ENCODE measurements at regions of chr5 and their contacts with region 1.

Region 1: GRCh38 chr5:41193456-41194205 is 19.7 kb downstream of the C6 start:
- DNase-seq: peak; percentile 94 to 99 (median 97)
- ATAC-seq: peak; percentile 96 to 98 (median 97)
- H3K4me3 ChIP-seq: no peak overlapping the region
- H3K27ac ChIP-seq: peak overlapping the region; percentile 58 to 85 (median 78)
- H3K4me1 ChIP-seq: peaks cover 0 to 30% (median 16%) of the 10 kb centered on the region in 12 donors
- H3K27me3 ChIP-seq: no peaks in the 10 kb centered on the region
- CTCF ChIP-seq: no peak
- POLR2A ChIP-seq: no peak

Region 2: GRCh38 chr5:40755407-40756365 is 437.9 kb before region 1 on chr5 and contains the start of gene TTC33:
- intact Hi-C with region 1: no loop called
- DNase-seq: peak; percentile 95 to 97 (median 96)
- ATAC-seq: peak; percentile 98 to 99 (median 99)
- H3K4me3 ChIP-seq: peak within 1 kb of the TSS; percentile 57 to 98 (median 84)
- H3K27ac ChIP-seq: peak within 1 kb of the TSS; percentile 49 to 95 (median 90)
- H3K4me1 ChIP-seq: peaks cover 0 to 20% (median 11%) of the 10 kb centered on the region in 12 donors
- H3K27me3 ChIP-seq: no peaks in the 10 kb centered on the region
- CTCF ChIP-seq: peak; percentile 43 to 88 (median 75)
- POLR2A ChIP-seq: peak in 1 of 2 donors; percentile 59
- total RNA-seq, gene TTC33: 11.3 to 20.0 (median 14.2) TPM

Region 3: GRCh38 chr5:40991168-40991980 is 202.3 kb before region 1 on chr5:
- intact Hi-C with region 1: loop called in 3 of 10 experiments (anchors 5 to 10 kb)
- DNase-seq: peak in 4 of 5 donors; percentile 46 to 67 (median 53)
- ATAC-seq: peak; percentile 83 to 96 (median 94)
- H3K4me3 ChIP-seq: no peak overlapping the region
- H3K27ac ChIP-seq: peak overlapping the region; percentile 32 to 82 (median 70)
- H3K4me1 ChIP-seq: peaks cover 0 to 25% (median 11%) of the 10 kb centered on the region in 12 donors
- H3K27me3 ChIP-seq: no peaks in the 10 kb centered on the region
- CTCF ChIP-seq: peak in 1 of 12 donors; percentile 17
- POLR2A ChIP-seq: no peak